ENCODE measurements at regions of chr16 and their contacts with region 1.

Region 1: DNA sequence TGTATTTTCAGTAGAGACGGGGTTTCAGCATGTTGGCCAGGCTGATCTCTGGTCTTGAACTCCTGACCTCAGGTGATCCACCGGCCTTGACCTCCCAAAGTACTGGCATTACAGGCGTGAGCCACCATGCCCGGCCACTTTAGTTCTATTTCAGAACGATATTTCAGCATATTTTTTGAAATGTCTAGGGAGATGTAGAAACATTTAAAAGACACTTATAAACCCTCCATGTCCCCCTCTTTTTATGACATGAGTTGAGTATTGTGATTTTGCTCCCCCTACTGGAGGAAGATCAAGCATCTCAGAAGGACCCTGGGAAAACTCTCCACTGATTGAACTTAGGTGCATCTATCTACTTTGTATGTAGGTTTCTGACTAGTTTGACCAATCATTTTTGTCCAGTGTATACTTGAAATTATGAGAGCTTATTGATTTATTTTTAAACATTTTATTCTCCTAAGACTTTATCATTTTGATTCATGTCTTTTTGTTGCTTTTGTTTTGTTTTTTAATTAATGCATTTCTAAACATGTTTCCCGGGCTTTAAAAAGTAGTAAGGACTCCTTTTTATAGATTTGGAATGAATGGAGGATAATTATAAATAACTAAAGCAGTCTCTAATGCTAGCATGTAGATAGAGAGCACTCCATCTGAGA is 105.1 kb downstream of the CHD9 start:
- DNase-seq: no peak
- ATAC-seq: peak; percentile 75
- H3K4me3 ChIP-seq: no peak overlapping the region
- H3K27ac ChIP-seq: no peak overlapping the region
- H3K4me1 ChIP-seq: no peaks in the 10 kb centered on the region
- H3K27me3 ChIP-seq: no peaks in the 10 kb centered on the region
- CTCF ChIP-seq: peak; percentile 75

Region 2: DNA sequence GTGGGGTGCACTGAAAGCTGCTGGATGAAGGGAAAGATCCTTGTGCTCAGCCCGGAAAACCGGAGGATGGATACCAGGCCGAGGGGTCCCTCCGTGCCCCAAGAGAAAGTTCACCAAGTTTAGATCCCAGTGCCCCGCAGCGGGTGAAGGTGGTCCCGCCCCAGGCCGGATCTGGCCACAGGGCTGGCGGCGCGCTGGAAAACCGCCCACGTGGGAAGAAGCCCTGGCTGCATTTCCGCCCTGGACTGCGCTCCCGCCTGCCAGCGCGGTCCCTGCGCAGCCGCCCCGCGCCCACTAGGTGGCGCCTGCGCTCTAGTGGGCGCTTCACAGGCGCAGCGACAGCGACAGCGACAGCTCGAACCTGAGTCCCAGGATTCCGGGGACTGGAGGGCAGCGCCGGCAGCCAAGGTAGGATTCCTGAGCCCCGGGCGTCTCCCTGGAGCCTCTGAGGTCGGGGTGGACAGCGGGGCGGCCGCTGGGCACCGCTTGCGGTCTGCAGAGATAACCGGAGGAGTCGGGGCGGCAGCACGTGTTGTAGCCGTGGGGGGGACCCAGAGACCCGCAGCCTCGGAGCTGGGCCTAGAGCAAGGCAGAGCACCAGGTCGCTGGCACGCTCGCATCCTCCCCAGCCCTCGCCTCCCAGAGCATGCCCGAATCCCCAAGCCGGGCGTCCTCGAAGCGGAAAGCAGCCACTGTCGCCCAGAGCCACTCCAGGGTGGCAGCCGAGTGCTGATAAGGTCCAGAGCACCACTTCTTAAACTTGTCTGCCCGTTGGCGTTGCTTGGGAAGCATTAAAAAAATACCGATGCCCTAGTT is 105.0 kb before region 1 on chr16 and contains the start of gene CHD9:
- intact Hi-C with region 1: loop called (anchors 5 kb)
- DNase-seq: peak; percentile 92
- ATAC-seq: peak; percentile 96
- H3K4me3 ChIP-seq: peak within 1 kb of the TSS; percentile 75
- H3K27ac ChIP-seq: peak within 1 kb of the TSS; percentile 92
- H3K4me1 ChIP-seq: peaks cover 28% of the 10 kb centered on the region
- H3K27me3 ChIP-seq: no peaks in the 10 kb centered on the region
- CTCF ChIP-seq: peak; percentile 100
- total RNA-seq, gene CHD9: 81.4 TPM

Measured in upper lobe of right lung (tissue), 1 donor.